ENCODE measurements at regions of chr1 and their contacts with region 1.

Region 1: DNA sequence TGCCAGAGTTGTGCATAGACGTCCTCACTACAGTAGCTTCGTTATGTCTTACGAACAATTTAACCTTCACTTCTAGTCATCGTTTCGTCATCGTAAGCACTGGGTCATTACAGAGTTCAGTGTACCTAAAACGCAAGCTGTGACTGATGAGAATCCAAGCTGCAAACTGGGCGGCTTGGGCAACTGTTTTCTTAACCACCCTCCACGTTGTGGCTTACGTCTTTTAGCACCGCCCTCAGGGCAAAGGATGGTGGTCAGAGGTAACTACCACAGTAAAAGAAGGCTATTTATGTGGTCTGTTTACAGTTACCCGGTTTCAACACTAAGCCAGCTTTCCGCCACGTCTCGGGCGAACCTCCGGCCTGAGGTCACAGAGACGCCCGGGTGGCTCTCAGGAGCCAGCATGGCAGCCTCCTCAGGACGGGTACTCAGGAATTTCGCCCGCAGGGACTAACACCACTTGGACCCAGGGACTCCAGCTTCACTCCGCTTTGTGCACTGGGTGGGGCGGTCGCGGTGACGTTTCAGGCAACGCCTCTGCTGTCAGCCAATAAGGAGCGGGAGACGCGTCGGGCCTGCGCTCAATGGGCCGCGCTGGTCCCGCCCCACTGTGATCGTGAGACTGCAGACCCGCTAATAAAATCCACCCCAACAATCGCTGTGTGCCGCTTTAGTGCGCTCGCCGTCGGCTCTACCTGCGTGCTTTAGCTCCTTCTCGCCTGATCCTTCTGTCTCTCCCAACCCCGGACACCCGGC is at the start of gene CTH:
- DNase-seq: peak; percentile 97
- H3K4me3 Mint-ChIP-seq: peak within 1 kb of the TSS; percentile 89
- H3K27ac Mint-ChIP-seq: peak within 1 kb of the TSS; percentile 97
- H3K4me1 Mint-ChIP-seq: no peaks in the 10 kb centered on the region
- H3K27me3 Mint-ChIP-seq: no peaks in the 10 kb centered on the region
- CTCF ChIP-seq: no peak
- total RNA-seq, gene CTH: 15.5 and 15.9 TPM in 2 replicates

Region 2: DNA sequence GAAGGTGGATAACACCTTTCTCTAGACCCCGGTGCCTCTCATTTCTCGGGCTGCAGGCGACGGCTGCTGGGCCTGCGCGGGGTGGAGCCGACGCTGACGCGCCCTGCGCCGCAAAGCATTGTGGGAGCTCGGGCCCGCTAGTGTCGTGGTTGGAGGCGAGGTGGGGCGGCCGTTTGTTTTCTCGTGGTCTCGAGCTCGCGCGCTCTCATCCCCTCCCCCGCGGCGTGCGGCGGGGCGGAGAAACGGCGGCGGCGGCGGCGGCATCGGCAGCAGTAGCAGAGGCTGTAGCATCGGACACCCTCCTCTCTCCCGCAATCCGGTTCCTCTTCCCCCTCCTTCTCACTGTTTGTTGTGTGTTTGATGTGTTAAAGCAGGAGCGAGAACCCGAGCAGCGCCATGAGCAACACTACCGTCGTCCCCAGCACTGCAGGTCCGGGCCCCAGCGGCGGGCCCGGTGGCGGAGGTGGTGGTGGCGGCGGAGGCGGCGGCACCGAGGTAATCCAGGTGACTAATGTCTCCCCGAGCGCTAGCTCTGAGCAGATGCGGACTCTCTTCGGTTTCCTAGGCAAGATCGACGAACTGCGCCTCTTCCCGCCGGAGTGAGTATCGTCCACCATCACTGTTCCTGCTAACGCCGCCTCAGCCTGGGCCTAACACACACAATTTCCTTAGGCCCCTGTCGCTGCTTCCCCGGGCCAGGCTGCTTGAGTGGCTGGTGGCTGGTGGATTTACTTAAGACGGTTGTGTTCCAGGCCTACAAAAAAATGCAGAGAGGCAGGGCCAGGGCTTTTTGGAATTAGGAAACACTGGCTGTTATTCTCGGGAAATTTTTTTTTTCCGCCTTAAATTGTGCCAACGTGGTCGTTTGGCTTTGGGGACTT is 189.3 kb before region 1 on chr1 and contains the start of gene SRSF11:
- CTCF ChIA-PET with region 1: interaction called, 3 read pairs
- intact Hi-C with region 1: loop called (anchors 5 kb)
- DNase-seq: peak; percentile 97
- H3K4me3 Mint-ChIP-seq: peak within 1 kb of the TSS; percentile 89
- H3K27ac Mint-ChIP-seq: peak within 1 kb of the TSS; percentile 95
- H3K4me1 Mint-ChIP-seq: peaks cover 33% of the 10 kb centered on the region
- H3K27me3 Mint-ChIP-seq: no peaks in the 10 kb centered on the region
- CTCF ChIP-seq: no peak
- total RNA-seq, gene SRSF11: 143 and 148 TPM in 2 replicates

Region 3: GRCh38 chr1:70354332-70355110 is 56.3 kb before region 1 on chr1 and contains the start of gene ANKRD13C:
- CTCF ChIA-PET with region 1: interaction called, 6 read pairs
- intact Hi-C with region 1: loop called (anchors 2 kb)
- DNase-seq: peak; percentile 92
- H3K4me3 Mint-ChIP-seq: peak within 1 kb of the TSS; percentile 99
- H3K27ac Mint-ChIP-seq: peak within 1 kb of the TSS; percentile 99
- H3K4me1 Mint-ChIP-seq: peaks cover 20% of the 10 kb centered on the region
- H3K27me3 Mint-ChIP-seq: no peaks in the 10 kb centered on the region
- CTCF ChIP-seq: no peak
- total RNA-seq, gene ANKRD13C: 24.6 and 25.2 TPM in 2 replicates

Region 4: DNA sequence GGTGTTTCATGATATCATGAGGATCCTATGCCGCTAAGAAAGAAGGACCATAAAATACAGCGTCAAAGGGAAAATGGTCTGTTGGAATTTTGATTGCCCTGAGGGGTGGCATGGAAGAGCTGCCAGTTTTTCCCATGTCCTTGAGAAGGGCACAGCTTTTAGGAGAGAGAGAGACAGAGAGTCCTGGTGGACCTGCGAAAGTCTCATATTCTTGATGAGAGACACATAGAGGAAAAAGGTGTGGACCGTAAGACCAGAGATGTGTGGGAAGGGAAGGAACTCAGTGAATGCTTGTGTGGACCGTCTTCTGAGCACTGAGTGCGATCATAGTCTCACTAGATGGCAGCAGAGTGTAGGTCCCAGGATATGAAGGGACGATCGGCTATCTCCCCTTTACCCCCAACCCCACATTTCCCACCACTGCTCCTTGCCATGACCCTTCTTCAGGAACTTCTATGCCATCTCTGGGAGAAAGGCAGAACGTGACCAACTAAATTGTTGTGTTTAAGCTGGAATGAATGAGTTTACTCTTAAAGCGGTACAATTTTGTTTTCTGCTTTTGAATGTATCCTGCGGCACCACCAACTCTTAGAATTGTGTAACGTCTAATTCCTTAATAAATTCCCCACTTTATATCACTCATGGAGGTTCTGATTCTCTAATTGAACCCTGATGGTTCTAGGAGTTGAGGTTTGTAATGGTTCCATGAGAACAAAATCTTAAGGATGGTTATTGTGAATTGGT is 118.0 kb after region 1 on chr1:
- CTCF ChIA-PET with region 1: no interaction called
- intact Hi-C with region 1: no loop called
- DNase-seq: peak; percentile 30
- H3K4me3 Mint-ChIP-seq: no peak overlapping the region
- H3K27ac Mint-ChIP-seq: no peak overlapping the region
- H3K4me1 Mint-ChIP-seq: peaks cover 8% of the 10 kb centered on the region
- H3K27me3 Mint-ChIP-seq: peaks cover 14% of the 10 kb centered on the region
- CTCF ChIP-seq: peak; percentile 54